HEK293T (cell line): ENCODE measurements at regions of chr9 and their contacts with region 1.

Region 1: DNA sequence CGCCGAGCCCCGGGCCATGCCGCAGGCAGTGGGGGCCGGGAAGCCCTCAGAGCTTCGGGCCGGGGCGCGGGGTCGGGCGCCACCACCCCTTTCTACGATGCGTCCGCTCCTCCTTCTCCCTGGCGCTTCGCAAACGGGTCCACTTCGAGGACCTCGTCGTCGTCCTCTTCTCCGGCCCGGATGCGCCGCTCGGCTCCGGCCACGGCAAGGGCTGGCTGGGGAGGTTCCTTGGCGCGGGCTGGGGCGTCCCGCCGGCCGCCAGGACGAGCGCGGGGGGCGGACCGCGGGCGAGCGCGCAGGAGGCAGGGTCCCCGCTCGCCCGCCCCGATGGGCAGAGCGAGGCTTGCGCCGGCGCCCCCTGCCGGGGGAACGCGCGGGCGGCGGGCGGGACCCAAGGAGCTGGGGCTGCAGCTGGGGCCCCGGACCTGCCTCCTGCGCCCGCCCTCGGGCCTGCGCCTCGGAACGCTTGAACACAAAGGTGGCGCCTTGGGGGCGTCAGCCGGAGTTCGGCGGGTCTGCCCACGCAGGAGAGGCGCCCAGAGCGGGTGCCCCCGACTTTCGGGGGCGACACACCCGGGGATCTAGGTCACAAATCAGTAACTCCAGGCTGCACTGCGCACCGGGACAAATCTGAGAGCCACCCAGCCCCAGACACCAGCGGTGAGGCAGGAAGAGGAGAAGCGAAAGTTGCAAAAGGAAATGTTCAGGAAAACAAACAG is at the start of gene ROR2:
- DNase-seq: peak; percentile 81

Region 2: GRCh38 chr9:91758491-91758981 is 191.6 kb before region 1 on chr9:
- CTCF ChIA-PET with region 1: interaction called, 11 read pairs
- POLR2A ChIA-PET with region 1: interaction called, 5 read pairs
- DNase-seq: peak; percentile 66

Region 3: DNA sequence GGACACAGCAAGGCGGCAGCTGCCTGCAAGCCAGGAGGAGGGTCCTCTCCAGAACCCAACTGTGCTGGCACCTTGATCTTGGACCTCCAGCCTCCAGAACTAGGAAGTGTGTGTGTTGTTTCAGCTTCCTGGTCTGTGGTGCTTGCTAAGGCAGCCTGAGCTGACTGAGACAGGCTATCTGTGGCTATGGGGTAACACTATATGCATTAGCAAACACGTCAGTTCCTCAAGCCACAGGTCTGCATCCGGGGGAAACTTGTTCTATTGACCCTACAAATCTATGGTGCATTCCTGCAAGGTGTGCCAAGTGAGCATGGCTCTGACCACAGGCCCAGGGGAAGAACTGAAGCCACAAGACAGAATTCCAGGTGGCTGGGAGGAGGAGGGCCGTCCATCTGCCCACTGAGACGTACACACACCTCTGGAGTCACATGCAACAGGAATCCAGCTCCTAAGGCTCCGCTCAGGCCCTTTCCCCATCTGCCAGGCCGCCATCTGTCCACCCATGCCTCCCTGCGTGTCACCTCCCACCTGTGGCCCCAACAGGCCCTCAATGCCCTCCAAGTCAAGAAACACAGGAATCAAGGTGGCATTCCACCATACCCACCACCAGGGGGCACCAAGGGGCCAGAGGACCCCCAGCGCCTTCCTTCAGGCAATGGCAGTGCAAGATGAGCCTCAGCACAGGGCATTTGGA is 174.9 kb before region 1 on chr9:
- CTCF ChIA-PET with region 1: interaction called, 19 read pairs
- POLR2A ChIA-PET with region 1: interaction called, 3 read pairs
- DNase-seq: peak; percentile 83

Region 4: GRCh38 chr9:91908746-91909145 is 41.4 kb before region 1 on chr9:
- CTCF ChIA-PET with region 1: no interaction called
- POLR2A ChIA-PET with region 1: no interaction called
- DNase-seq: no peak

Region 5: GRCh38 chr9:91935066-91935749 is 14.9 kb before region 1 on chr9:
- CTCF ChIA-PET with region 1: interaction called, 11 read pairs
- POLR2A ChIA-PET with region 1: no interaction called
- DNase-seq: no peak